ENCODE measurements at regions of chr2 and their contacts with region 1.

Region 1: DNA sequence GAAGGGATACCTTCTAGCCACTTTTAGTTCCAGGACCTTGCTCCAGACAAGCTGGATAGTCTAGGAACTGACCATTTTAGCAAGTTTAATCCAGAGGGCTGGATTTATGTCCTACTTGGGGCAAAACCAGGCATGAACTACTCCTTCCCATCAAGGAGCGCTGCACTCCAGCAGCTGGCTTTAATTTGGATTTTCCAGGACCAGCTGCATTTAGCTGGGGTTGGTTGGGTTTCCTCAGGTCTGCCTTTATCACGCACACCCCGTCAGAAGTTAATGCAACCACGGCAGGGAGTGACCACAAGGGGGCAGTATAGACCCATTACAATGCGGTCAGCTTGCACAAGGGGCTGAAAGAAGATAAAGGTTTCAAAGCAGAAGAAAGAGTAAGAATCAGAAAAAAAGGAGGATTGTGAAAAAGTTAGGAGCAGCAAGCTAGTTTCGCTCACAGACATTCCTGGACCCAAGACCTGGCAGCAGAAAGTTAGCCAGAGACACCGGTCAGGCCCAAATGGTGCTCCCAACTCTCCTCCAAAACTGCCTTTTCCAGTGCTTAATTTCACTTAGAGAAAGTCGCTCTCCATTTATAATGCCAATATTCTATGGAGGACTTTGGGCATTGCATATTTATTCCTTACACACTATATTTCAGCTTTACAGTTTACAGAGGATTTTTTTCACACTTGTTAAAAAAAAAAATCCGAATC is 40.1 kb downstream of the SLC4A1AP start:
- DNase-seq: peak; percentile 73 to 80
- H3K4me3 ChIP-seq: no peak overlapping the region
- H3K27ac ChIP-seq: peak overlapping the region; percentile 98
- H3K4me1 ChIP-seq: peaks cover 53% of the 10 kb centered on the region
- H3K27me3 ChIP-seq: no peaks in the 10 kb centered on the region
- CTCF ChIP-seq: peak; percentile 95

Region 2: GRCh38 chr2:26757873-26758789 is 945.7 kb before region 1 on chr2:
- CTCF ChIA-PET with region 1: no interaction called
- POLR2A ChIA-PET with region 1: no interaction called
- intact Hi-C with region 1: no loop called
- DNase-seq: peak; percentile 85 to 99
- H3K4me3 ChIP-seq: peak overlapping the region; percentile 21; the same call in 1 of the 2 replicates
- H3K27ac ChIP-seq: peak overlapping the region; percentile 98
- H3K4me1 ChIP-seq: peaks cover 54% of the 10 kb centered on the region
- H3K27me3 ChIP-seq: no peaks in the 10 kb centered on the region
- CTCF ChIP-seq: no peak

Region 3: DNA sequence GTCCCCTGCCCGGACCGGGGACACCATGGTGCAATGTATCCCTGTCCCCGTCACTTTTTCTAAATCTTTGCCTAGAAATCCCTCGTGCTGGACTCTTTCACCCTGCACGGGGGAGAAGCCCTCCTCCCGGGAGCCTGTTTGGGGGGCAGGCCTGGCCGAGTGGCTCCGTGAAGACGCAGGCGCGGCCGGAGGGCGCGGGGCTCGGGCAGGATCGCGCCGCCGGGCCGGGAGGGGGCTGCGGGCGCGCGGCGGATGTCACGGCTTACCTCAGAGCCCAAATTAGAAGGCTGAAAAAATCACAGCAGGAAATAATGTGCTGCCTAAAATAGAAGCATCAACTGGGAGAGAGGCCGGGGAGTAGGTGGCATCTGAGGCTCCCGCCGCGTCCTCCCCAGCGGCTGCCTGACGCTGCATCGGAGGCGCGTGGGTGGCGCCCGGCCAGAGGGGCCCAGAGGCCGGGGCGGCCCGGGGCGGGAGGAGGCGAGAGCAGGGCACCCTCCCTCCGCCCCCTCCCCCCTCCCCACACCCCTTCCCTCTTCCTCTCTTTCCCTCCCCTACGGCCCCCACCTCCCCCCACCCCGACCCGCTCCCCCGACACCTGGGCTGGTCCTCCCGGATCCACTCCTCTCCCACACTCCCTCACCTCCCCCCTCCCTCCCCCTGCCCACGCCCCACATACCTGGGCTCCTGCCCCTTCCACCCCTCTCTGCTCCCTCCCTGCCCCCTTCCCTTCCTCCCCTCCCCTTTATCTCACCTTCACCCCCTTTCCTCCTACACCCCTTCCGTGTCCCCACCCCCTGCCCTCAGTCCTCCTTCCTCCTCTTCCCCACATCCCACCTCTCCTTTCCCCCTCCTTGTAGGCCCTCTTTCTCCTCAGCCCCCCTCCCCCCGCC is 11.8 kb after region 1 on chr2:
- CTCF ChIA-PET with region 1: interaction called, 10 read pairs
- POLR2A ChIA-PET with region 1: interaction called, 18 read pairs
- intact Hi-C with region 1: no loop called
- DNase-seq: peak; percentile 71 to 78
- H3K4me3 ChIP-seq: peak overlapping the region; percentile 80
- H3K27ac ChIP-seq: peak overlapping the region; percentile 94
- H3K4me1 ChIP-seq: peaks cover 89% of the 10 kb centered on the region
- H3K27me3 ChIP-seq: no peaks in the 10 kb centered on the region
- CTCF ChIP-seq: no peak

Region 4: DNA sequence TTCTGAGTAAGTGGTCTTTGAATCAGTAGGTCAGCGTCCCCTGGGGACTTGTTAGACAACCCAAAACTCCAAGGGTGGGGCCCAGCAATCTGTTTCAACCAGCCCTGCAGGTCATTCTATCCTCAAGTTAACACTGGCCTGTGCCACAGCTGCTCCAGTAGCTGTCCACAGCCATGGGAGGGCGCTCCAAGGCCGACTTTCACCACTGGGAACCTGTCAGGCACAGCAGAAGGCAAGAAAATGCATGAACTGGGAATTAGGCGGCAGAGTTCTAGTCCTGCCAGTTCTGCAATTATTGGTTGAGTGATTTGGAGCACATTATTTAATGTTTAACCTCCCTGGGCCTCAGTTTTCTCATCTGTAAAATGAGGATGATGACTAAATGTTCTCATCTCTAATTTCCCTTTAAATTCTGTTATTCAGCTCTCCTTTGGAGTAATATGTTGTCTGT is 50.4 kb after region 1 on chr2:
- CTCF ChIA-PET with region 1: interaction called, 8 read pairs
- POLR2A ChIA-PET with region 1: interaction called, 6 read pairs
- intact Hi-C with region 1: loop called (anchors 1 kb)
- DNase-seq: peak; percentile 79 to 87
- H3K4me3 ChIP-seq: peak overlapping the region; percentile 43; the same call in 1 of the 2 replicates
- H3K27ac ChIP-seq: peak overlapping the region; percentile 96
- H3K4me1 ChIP-seq: peaks cover 39% of the 10 kb centered on the region
- H3K27me3 ChIP-seq: no peaks in the 10 kb centered on the region
- CTCF ChIP-seq: peak; percentile 96

Region 5: DNA sequence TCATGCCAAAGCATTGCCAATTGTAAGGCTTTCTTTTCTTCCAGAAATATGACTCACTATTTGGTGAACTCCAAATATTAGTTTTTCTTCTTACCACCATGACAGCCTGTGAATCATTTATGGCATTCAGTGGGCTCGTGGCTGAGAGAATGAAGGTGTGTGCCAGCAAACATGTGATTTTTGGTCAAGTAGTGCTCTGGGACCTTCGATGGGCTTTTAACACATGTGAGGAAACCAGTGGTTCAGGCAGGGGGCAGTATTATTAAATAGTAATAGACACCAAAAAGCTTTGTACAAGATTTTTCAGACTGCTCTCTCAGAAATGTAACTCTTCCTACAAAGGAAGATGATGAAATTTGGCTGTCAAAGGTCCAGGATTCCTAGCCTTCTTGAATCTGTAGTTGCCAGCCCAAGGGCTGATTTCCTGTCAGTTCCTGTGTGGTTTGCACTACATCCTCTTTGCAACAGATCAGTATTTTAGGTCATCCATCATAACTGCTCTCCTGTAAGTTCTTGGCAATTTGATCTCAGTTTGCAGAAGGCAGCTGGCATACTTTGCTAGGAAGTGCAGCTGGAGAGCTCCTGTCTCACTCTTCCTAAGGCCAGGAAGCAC is 251.1 kb after region 1 on chr2:
- CTCF ChIA-PET with region 1: no interaction called
- POLR2A ChIA-PET with region 1: interaction called, 3 read pairs
- intact Hi-C with region 1: loop called (anchors 10 kb)
- DNase-seq: peak; percentile 48 to 96
- H3K4me3 ChIP-seq: no peak overlapping the region; the same call in 1 of the 2 replicates
- H3K27ac ChIP-seq: peak overlapping the region; percentile 88
- H3K4me1 ChIP-seq: peaks cover 61% of the 10 kb centered on the region
- H3K27me3 ChIP-seq: no peaks in the 10 kb centered on the region
- CTCF ChIP-seq: peak; percentile 38; the same call in 1 of the 2 replicates

Region 6: DNA sequence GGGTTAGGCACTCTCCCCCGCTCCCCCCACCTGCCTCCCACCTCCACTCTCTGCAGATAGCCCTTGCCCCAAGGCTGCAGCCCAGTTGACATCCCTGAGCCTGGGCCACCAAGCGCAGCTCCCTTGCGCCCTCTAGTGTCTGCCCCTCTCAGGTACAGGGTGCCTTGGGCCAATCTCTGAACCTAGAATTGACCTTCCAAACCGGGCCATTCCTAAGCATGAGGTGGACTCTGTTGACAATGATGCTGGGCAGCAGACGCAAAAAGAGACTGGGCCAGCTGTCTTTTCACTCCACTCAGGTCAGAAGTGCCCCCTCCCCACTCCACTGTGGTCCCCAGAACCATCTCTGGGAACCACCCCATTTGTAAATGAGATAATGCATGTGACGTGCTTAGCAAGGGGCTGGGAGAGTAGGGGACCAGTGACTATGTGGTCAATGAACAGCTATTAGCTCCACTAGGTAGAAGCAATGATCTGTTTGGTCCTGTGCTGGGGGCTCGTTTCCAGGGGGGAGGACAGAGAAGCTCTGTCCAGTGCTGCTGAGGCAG is 748.8 kb after region 1 on chr2:
- CTCF ChIA-PET with region 1: no interaction called
- POLR2A ChIA-PET with region 1: interaction called, 3 read pairs
- intact Hi-C with region 1: loop called (anchors 1 kb)
- DNase-seq: peak in 1 of 2 experiments; percentile 75
- H3K4me3 ChIP-seq: no peak overlapping the region
- H3K27ac ChIP-seq: no peak overlapping the region
- H3K4me1 ChIP-seq: peaks cover 44% of the 10 kb centered on the region
- H3K27me3 ChIP-seq: no peaks in the 10 kb centered on the region
- CTCF ChIP-seq: peak; percentile 97

Measured in PC-9 (cell line).